ENCODE measurements at regions of chr6 and their contacts with region 1.

Region 1: GRCh38 chr6:25100288-25100687 is 164.5 kb upstream of the RIPOR2 start:
- DNase-seq: no peak
- ATAC-seq: no peak
- H3K4me3 Mint-ChIP-seq: no peak overlapping the region
- H3K27ac Mint-ChIP-seq: no peak overlapping the region
- H3K4me1 Mint-ChIP-seq: peaks cover 2% of the 10 kb centered on the region
- H3K27me3 Mint-ChIP-seq: no peaks in the 10 kb centered on the region

Region 2: GRCh38 chr6:25085756-25086155 is 14.5 kb before region 1 on chr6:
- POLR2A ChIA-PET with region 1: no interaction called
- DNase-seq: no peak
- ATAC-seq: peak; percentile 83
- H3K4me3 Mint-ChIP-seq: peak overlapping the region; percentile 41
- H3K27ac Mint-ChIP-seq: peak overlapping the region; percentile 63
- H3K4me1 Mint-ChIP-seq: peaks cover 12% of the 10 kb centered on the region
- H3K27me3 Mint-ChIP-seq: no peaks in the 10 kb centered on the region

Region 3: GRCh38 chr6:25130518-25130917 is 30.2 kb after region 1 on chr6:
- POLR2A ChIA-PET with region 1: interaction called, 14 read pairs
- DNase-seq: no peak
- ATAC-seq: no peak
- H3K4me3 Mint-ChIP-seq: peak overlapping the region; percentile 37
- H3K27ac Mint-ChIP-seq: no peak overlapping the region
- H3K4me1 Mint-ChIP-seq: peaks cover 26% of the 10 kb centered on the region
- H3K27me3 Mint-ChIP-seq: no peaks in the 10 kb centered on the region